ENCODE measurements at regions of chr9 and their contacts with region 1.

Region 1: DNA sequence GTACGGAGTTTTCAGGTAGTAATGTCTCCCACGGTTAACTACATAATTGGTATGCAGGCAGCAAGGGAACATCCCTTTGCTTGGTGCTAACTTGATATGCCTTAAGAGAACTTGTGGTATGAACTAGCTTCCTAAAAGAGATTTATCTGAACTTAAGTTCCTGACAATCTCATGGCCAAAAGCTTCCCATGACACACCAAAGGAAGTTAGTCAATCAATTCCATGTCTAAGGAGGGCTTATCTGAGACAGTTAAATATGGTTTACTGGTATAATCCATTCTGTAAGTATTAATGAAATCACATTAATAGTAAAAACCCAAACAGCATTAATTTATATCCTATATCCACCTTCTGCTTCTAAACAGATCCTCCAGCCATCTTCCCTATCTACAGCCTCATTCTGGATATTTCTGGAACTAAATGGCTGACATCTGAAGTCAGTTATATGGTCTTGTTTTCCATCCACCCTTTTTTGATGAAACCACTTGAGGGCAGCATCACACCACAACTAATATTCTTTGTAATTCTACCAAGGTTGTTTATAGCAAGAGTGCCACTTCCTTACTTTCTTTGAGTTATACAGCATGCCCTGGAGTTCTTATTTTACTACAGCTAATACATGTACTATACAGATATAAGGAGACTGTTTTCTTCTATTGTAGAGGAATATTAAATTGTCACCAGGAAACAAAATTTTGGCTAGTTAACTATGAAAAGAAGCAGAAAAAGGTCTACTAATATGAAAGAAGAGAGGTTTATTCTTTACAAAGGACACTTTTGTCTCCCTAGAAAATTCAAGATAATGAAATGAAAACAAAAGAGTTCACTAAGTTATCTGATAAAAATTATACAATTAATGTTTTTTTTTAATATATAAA is 34.7 kb downstream of the SHOC1 start:
- DNase-seq: peak; percentile 57
- ATAC-seq: peak; percentile 70
- H3K4me3 Mint-ChIP-seq: no peak overlapping the region
- H3K27ac Mint-ChIP-seq: peak overlapping the region; percentile 3
- H3K4me1 Mint-ChIP-seq: peaks cover 4% of the 10 kb centered on the region
- H3K27me3 Mint-ChIP-seq: no peaks in the 10 kb centered on the region

Region 2: GRCh38 chr9:111975709-111976108 is 215.7 kb after region 1 on chr9:
- CTCF ChIA-PET with region 1: no interaction called
- POLR2A ChIA-PET with region 1: no interaction called
- intact Hi-C with region 1: loop called in 1 of 2 experiments (anchors 1 kb)
- DNase-seq: peak; percentile 54
- ATAC-seq: peak; percentile 58
- H3K4me3 Mint-ChIP-seq: no peak overlapping the region
- H3K27ac Mint-ChIP-seq: no peak overlapping the region
- H3K4me1 Mint-ChIP-seq: peaks cover 4% of the 10 kb centered on the region
- H3K27me3 Mint-ChIP-seq: no peaks in the 10 kb centered on the region

Region 3: GRCh38 chr9:112065806-112066606 is 306.0 kb after region 1 on chr9:
- CTCF ChIA-PET with region 1: interaction called, 14 read pairs
- POLR2A ChIA-PET with region 1: no interaction called
- intact Hi-C with region 1: no loop called
- DNase-seq: peak; percentile 23
- ATAC-seq: peak; percentile 27
- H3K4me3 Mint-ChIP-seq: no peak overlapping the region
- H3K27ac Mint-ChIP-seq: no peak overlapping the region
- H3K4me1 Mint-ChIP-seq: peaks cover 11% of the 10 kb centered on the region
- H3K27me3 Mint-ChIP-seq: peaks cover 2% of the 10 kb centered on the region

Region 4: DNA sequence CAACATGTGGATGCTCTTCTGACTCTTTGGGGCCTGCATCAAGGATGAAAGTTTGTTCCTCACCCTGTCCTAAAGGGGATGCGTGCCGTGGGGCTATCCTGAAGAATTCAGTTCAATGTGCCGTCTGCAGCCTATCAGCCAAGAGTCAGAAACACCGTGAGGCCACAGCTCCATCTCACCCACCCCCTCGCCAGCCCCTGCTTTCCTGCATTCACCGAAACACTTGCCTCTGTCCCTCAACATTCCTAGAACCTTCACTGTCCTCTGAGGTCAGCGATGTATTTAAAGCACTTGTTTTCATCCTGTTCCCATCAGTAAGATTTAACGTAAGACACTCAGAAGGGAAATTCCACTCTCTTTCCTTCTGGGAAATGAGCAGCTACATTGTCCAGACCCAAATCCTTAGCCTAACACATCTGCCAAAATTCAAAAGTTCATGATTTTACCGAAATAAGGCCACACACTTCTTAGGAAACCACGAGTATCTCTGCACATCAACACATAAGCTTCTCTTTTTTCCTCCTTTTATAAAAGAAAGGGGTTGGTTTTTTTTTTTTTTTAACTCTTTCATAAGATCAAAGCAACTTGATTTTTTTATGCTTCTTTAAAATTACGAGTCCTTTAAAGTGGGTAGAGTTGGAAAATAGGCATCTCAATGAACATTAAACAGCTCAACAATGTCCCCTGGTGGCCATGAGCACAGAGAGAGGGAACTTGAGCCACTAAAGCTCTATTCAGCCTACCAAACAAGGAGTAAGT is 314.4 kb after region 1 on chr9:
- CTCF ChIA-PET with region 1: interaction called, 107 read pairs
- POLR2A ChIA-PET with region 1: no interaction called
- intact Hi-C with region 1: loop called (anchors 1 kb)
- DNase-seq: peak; percentile 81
- ATAC-seq: peak; percentile 85
- H3K4me3 Mint-ChIP-seq: no peak overlapping the region
- H3K27ac Mint-ChIP-seq: peak overlapping the region; percentile 72
- H3K4me1 Mint-ChIP-seq: peaks cover 35% of the 10 kb centered on the region
- H3K27me3 Mint-ChIP-seq: peaks cover 4% of the 10 kb centered on the region

Region 5: DNA sequence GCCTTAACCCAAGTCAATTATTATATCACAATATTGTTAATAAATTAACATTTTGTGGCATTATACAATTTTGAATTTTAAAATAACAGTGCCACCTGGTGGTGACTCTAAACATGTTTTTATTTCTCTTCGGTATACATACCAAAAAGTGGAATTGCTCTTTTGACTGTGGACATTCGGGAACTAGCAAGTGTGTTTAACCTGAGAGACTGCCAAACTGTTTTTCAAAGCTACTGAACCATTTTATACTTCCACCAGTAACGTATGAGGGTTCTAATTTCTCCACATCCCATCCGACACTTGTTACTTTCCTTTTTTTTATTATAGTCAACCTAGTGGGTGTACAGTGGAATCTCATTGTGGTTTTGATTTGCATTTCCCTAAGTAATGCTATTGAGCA is 601.6 kb after region 1 on chr9:
- CTCF ChIA-PET with region 1: interaction called, 3 read pairs
- POLR2A ChIA-PET with region 1: no interaction called
- intact Hi-C with region 1: loop called (anchors 2 to 5 kb)
- DNase-seq: no peak
- ATAC-seq: no peak
- H3K4me3 Mint-ChIP-seq: no peak overlapping the region
- H3K27ac Mint-ChIP-seq: no peak overlapping the region
- H3K4me1 Mint-ChIP-seq: peaks cover 11% of the 10 kb centered on the region
- H3K27me3 Mint-ChIP-seq: peaks cover 6% of the 10 kb centered on the region